Esophagus squamous epithelium (tissue), 5 donors: ENCODE measurements at regions of chr18 and their contacts with region 1.

Region 1: GRCh38 chr18:23703057-23703986 is 14.1 kb downstream of the LAMA3 start:
- DNase-seq: no peak
- H3K4me3 ChIP-seq: no peak overlapping the region
- H3K27ac ChIP-seq: no peak overlapping the region
- H3K4me1 ChIP-seq: peaks cover 0 to 6% (median 0%) of the 10 kb centered on the region in 3 donors
- H3K27me3 ChIP-seq: no peaks in the 10 kb centered on the region
- CTCF ChIP-seq: peak; percentile 22 to 83 (median 66)
- POLR2A ChIP-seq: no peak

Region 2: GRCh38 chr18:23623040-23623439 is 80.3 kb before region 1 on chr18:
- intact Hi-C with region 1: loop called (anchors 5 kb)
- DNase-seq: no peak
- H3K4me3 ChIP-seq: no peak overlapping the region
- H3K27ac ChIP-seq: no peak overlapping the region
- H3K4me1 ChIP-seq: peaks cover 5 to 23% (median 12%) of the 10 kb centered on the region in 3 donors
- H3K27me3 ChIP-seq: peaks cover 0 to 22% (median 0%) of the 10 kb centered on the region in 4 donors
- CTCF ChIP-seq: no peak
- POLR2A ChIP-seq: no peak

Region 3: GRCh38 chr18:23812546-23813440 is 109.5 kb after region 1 on chr18:
- intact Hi-C with region 1: no loop called
- DNase-seq: no peak
- H3K4me3 ChIP-seq: no peak overlapping the region
- H3K27ac ChIP-seq: no peak overlapping the region
- H3K4me1 ChIP-seq: no peaks in the 10 kb centered on the region
- H3K27me3 ChIP-seq: no peaks in the 10 kb centered on the region
- CTCF ChIP-seq: peak; percentile 23 to 69 (median 54)
- POLR2A ChIP-seq: no peak

Region 4: DNA sequence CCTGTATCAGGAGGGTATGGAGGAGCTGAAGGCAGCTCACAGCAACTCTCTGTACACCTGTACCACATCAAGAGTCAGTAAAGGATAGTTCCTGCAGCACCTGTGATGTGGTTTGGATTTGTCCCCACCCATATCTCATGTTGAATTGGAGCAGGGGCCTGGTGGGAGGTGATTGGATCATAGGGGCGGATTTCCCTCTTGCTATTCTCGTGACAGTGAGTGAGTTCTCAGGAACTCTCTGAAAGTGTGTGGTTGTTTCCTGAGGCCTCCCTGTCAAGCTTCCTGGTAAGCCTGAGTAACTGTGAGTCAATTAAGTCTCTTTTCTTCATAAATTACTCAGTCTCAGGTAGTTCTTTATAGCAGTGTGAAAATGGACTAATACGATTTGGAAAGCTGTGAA is 665.4 kb after region 1 on chr18:
- intact Hi-C with region 1: no loop called
- DNase-seq: no peak
- H3K4me3 ChIP-seq: no peak overlapping the region
- H3K27ac ChIP-seq: no peak overlapping the region
- H3K4me1 ChIP-seq: no peaks in the 10 kb centered on the region
- H3K27me3 ChIP-seq: no peaks in the 10 kb centered on the region
- CTCF ChIP-seq: no peak
- POLR2A ChIP-seq: no peak